ENCODE measurements at regions of chr3 and their contacts with region 1.

Region 1: DNA sequence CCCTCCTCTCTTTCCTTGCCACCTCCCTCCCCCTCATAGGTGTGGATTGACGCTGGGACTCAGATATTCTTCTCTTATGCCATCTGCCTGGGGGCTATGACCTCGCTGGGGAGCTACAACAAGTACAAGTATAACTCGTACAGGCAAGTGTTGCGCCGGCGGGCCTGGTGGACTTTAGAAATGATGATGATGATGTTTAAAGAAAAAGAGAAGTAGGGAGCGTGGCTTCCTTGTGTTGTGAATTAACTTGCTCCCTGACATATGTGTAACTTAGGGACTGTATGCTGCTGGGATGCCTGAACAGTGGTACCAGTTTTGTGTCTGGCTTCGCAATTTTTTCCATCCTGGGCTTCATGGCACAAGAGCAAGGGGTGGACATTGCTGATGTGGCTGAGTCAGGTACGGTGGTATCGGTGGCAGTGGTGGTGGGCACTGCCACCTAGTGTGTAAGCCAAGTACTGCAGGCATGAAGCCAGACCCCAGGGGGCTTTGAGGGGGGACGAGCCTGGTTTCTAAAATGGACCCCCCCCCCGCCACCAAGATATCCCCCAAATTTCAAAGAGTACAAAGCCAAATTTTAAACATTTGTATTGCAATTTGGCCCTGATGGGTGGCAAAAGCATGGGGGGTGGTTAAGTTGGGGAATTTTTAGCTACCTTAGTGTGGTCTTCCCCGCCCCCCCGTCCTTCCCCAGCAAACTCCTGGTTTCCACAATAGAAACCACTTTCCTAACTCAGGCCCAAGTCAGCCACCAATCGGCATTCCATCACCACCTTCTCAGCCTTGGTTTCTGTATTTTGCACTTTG is 65.6 kb downstream of the SLC6A6 start:
- DNase-seq: peak; percentile 51 to 73 (median 64)
- H3K4me3 ChIP-seq: no peak overlapping the region
- H3K27ac ChIP-seq: peak overlapping the region in 1 of 2 donors; percentile 58
- H3K4me1 ChIP-seq: peaks cover 4 to 35% (median 25%) of the 10 kb centered on the region in 3 donors
- H3K27me3 ChIP-seq: no peaks in the 10 kb centered on the region
- CTCF ChIP-seq: peak; percentile 93

Region 2: DNA sequence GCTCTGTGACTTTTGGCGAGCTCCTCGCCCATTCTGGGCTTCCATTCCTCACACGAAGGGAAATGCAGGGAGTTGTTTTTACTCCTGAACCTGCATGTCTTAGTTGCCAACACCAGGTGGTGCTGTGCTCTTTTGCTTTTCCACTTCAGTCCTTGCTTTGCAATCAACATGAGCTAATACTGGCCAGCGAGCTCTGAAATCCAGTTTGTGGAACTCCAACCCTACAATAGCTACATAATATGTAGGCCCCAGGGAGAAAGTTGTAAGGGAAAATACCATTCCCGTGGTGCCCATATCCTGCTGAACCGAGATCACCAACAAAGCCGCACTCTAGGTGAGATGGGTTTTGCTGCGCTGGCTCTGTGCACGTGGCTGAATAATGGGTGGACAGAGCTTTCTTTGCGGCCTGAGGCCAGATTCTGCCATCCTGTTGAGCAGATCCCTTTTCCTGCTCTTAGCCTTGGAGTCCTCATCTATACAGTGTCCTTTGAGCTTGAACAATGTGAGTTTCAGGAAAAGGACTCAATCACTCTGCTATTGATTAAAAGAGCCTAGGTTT is 264.4 kb before region 1 on chr3:
- intact Hi-C with region 1: loop called (anchors 5 kb)
- DNase-seq: peak in 4 of 5 donors; percentile 78 to 92 (median 84)
- H3K4me3 ChIP-seq: peak overlapping the region in 1 of 3 donors; percentile 10
- H3K27ac ChIP-seq: peak overlapping the region; percentile 74 to 93
- H3K4me1 ChIP-seq: peaks cover 7 to 57% (median 35%) of the 10 kb centered on the region in 3 donors
- H3K27me3 ChIP-seq: no peaks in the 10 kb centered on the region
- CTCF ChIP-seq: peak; percentile 96

Region 3: GRCh38 chr3:14266361-14266760 is 201.7 kb before region 1 on chr3:
- intact Hi-C with region 1: loop called (anchors 5 kb)
- DNase-seq: peak in 1 of 5 donors; percentile 52
- H3K4me3 ChIP-seq: no peak overlapping the region
- H3K27ac ChIP-seq: no peak overlapping the region
- H3K4me1 ChIP-seq: no peaks in the 10 kb centered on the region
- H3K27me3 ChIP-seq: no peaks in the 10 kb centered on the region
- CTCF ChIP-seq: no peak

Measured in kidney (tissue), 22 donors.